ENCODE measurements at regions of chr9 and their contacts with region 1.

Region 1: GRCh38 chr9:35954942-35955546 is 2.9 kb downstream of the OR2S2 start:
- DNase-seq: no peak
- ATAC-seq: peak; percentile 89

Region 2: DNA sequence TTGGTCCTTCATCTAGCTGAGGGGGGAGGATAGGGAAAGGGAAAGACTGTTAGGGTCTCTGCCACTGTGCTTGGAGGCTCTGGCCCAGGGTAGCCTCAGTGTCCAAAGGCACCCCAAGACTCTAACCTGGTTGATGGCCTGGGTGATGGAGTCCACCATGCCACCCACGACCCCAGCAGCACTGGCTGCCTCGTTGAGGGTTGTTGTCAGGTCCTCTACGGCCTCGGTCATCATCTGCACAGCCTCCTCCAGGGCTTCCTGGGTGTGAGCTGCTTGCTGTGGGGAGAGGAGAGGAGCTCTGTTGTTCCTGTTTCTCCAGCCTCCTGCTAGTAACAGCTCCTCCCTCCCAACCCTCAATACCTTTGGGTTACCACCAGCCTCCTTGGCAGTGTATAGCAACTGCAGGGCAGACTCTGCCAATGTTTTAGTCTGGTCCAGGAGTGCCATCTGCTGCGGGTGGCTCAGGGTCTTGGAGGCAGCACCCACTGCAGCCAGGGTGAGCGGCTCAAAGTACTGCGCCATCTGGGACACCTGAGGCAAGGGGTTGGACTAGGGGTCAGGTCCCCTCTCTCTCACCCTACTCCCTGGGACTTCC is 249.1 kb before region 1 on chr9:
- intact Hi-C with region 1: no loop called
- DNase-seq: peak; percentile 16
- ATAC-seq: no peak

Region 3: DNA sequence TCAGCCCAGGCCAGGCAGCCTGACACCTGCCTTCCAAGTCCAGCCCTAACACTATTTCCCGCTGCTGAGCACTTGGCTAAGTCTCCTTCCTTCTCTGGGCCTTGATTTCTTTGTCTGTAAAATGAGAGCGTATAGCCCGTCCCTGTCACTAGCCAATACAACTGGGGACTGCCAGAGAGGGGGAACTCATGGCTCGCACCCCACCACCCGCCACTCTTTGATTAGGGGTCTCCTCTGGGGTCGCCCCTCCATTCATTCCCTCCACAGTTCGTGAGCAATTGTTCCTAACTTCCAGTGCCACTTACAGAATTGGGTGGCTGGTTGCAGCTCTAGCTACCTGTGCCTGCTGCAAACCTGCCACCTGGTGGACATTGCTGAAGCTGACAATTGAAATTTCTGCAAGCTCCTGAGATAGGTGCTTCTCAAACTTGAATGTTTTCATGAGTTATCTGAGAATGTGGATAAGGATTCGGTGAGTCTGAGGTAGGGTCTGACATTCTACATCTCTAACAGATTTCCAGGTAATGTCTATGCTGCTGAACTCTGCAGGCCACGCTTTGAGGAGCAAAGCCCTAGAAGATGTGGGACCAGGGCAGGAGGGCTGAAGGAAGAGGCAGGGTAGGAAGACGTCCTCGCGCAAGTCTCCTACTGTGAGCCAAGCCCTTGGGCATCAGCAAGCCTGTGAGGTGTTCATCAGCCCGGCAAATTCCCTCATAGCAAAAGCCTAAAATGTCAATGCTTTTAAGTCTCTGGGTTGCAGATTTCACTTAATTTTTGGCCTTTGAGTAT is 68.4 kb after region 1 on chr9:
- intact Hi-C with region 1: loop called (anchors 2 kb)
- DNase-seq: peak; percentile 50
- ATAC-seq: peak; percentile 74

Region 4: GRCh38 chr9:36166101-36166927 is 211.3 kb after region 1 on chr9:
- intact Hi-C with region 1: no loop called
- DNase-seq: peak; percentile 91
- ATAC-seq: peak; percentile 97

Region 5: DNA sequence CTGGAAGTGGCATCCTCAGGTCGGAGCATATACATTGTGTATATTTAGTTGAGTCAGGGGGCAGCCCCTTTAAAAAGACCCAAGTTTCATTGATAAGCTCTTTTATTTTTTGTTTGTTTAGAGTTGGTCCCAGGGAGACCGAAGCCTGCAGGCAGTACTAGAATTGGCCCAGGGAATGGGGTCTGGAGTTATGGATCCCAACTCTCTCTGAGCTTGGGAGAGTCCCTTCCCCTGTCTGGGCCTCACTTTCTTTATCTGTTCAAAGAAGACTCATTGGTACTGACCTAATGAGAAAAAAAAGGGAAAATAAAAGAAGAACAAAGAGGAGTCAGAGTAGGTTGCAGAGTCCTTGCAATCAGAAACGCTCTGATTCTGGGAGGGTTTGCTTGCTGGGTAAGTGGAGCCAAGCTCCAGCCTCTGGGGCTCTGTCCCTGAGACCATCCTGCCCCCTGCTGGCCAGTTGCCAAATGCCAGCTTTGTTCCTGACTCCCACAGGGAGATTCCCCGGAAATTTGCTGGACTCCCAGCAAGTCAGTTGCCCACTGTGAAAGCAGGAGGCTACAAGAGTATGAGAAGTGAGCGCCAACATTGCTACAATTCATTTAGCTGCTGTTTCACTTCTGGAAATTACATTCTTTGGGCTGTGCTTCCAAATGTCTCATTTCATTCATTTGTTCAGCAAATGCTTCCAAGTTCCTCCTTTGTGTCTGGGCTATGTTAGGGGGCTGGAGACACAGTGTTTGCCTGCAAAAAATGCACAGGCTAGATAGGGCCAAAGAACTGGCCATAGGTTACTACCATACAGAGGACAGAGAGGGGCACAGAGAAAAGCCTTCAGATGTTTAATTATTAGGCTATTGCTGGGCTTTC is 773.8 kb after region 1 on chr9:
- intact Hi-C with region 1: no loop called
- DNase-seq: peak; percentile 58
- ATAC-seq: no peak